Caco-2 (cell line): ENCODE measurements at regions of chr11 and their contacts with region 1.

Region 1: GRCh38 chr11:68106165-68106957 is 14.8 kb downstream of the CHKA start:
- DNase-seq: peak; percentile 62 to 71
- H3K4me3 ChIP-seq: no peak overlapping the region
- H3K4me3 Mint-ChIP-seq: peak overlapping the region; percentile 40
- H3K27ac Mint-ChIP-seq: peak overlapping the region; percentile 59
- H3K4me1 ChIP-seq: peaks cover 37% of the 10 kb centered on the region
- H3K4me1 Mint-ChIP-seq: peaks cover 43% of the 10 kb centered on the region
- H3K27me3 ChIP-seq: no peaks in the 10 kb centered on the region
- H3K27me3 Mint-ChIP-seq: no peaks in the 10 kb centered on the region
- CTCF ChIP-seq: no peak

Region 2: GRCh38 chr11:68146704-68147474 is 40.5 kb after region 1 on chr11:
- CTCF ChIA-PET with region 1: interaction called, 3 read pairs
- POLR2A ChIA-PET with region 1: no interaction called
- intact Hi-C with region 1: loop called (anchors 5 kb)
- DNase-seq: peak; percentile 88 to 94
- H3K4me3 ChIP-seq: no peak overlapping the region
- H3K4me3 Mint-ChIP-seq: no peak overlapping the region
- H3K27ac Mint-ChIP-seq: peak overlapping the region; percentile 0
- H3K4me1 ChIP-seq: peaks cover 41% of the 10 kb centered on the region
- H3K4me1 Mint-ChIP-seq: peaks cover 26% of the 10 kb centered on the region
- H3K27me3 ChIP-seq: no peaks in the 10 kb centered on the region
- H3K27me3 Mint-ChIP-seq: no peaks in the 10 kb centered on the region
- CTCF ChIP-seq: peak in 1 of 2 experiments; percentile 6

Region 3: GRCh38 chr11:68168694-68169093 is 62.3 kb after region 1 on chr11:
- CTCF ChIA-PET with region 1: interaction called, 3 read pairs
- POLR2A ChIA-PET with region 1: no interaction called
- intact Hi-C with region 1: loop called (anchors 5 kb)
- DNase-seq: no peak
- H3K4me3 ChIP-seq: no peak overlapping the region
- H3K4me3 Mint-ChIP-seq: no peak overlapping the region
- H3K27ac Mint-ChIP-seq: no peak overlapping the region
- H3K4me1 ChIP-seq: peaks cover 14% of the 10 kb centered on the region
- H3K4me1 Mint-ChIP-seq: peaks cover 5% of the 10 kb centered on the region
- H3K27me3 ChIP-seq: no peaks in the 10 kb centered on the region
- H3K27me3 Mint-ChIP-seq: no peaks in the 10 kb centered on the region
- CTCF ChIP-seq: no peak

Region 4: DNA sequence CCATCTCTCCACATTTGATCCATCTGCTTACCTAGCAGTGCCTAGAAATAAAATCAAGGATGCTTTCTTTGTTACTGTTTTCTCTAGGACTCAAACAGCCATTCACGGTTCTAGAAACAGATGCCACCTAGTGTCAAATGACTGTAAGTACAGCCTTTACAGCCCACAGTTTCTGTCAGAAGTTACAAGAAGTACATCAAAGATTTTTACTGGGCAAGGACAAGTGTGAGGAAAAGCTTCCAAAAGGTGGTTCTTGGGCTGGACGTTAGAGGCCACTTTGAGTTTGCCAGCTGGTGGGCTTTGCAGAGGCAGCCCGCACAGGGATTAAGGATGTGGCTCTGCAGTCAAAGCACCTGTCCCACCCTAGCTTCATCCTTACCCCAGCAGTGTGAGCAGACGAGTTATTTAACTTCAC is 99.8 kb after region 1 on chr11:
- CTCF ChIA-PET with region 1: interaction called, 7 read pairs
- POLR2A ChIA-PET with region 1: interaction called, 3 read pairs
- intact Hi-C with region 1: loop called (anchors 5 kb)
- DNase-seq: peak in 1 of 2 experiments; percentile 70
- H3K4me3 ChIP-seq: no peak overlapping the region
- H3K4me3 Mint-ChIP-seq: no peak overlapping the region
- H3K27ac Mint-ChIP-seq: no peak overlapping the region
- H3K4me1 ChIP-seq: peaks cover 8% of the 10 kb centered on the region; the same call in 1 of the 2 replicates
- H3K4me1 Mint-ChIP-seq: peaks cover 26% of the 10 kb centered on the region
- H3K27me3 ChIP-seq: no peaks in the 10 kb centered on the region
- H3K27me3 Mint-ChIP-seq: no peaks in the 10 kb centered on the region
- CTCF ChIP-seq: peak; percentile 89 to 95